ENCODE measurements at regions of chr22 and their contacts with region 1.

Region 1: GRCh38 chr22:29245637-29246385 is 22.0 kb downstream of the RHBDD3 start:
- DNase-seq: peak; percentile 84
- H3K4me3 ChIP-seq: peak overlapping the region in 1 of 2 experiments; percentile 30; a peak in 1 of 4 replicates
- H3K27ac ChIP-seq: no peak overlapping the region
- H3K4me1 ChIP-seq: peaks cover 0 to 4% of the 10 kb centered on the region in 2 experiments; a peak in 1 of 4 replicates
- H3K27me3 ChIP-seq: no peaks in the 10 kb centered on the region
- CTCF ChIP-seq: peak; percentile 93
- EP300 ChIP-seq: no peak
- RAD21 ChIP-seq: peak; percentile 93

Region 2: GRCh38 chr22:28600546-28601143 is 645.2 kb before region 1 on chr22:
- CTCF ChIA-PET with region 1: interaction called, 18 read pairs
- POLR2A ChIA-PET with region 1: no interaction called
- DNase-seq: peak; percentile 25
- H3K4me3 ChIP-seq: no peak overlapping the region; a peak in 1 of 4 replicates
- H3K27ac ChIP-seq: no peak overlapping the region
- H3K4me1 ChIP-seq: peaks cover 0 to 3% of the 10 kb centered on the region in 2 experiments; a peak in 2 of 4 replicates
- H3K27me3 ChIP-seq: no peaks in the 10 kb centered on the region
- CTCF ChIP-seq: peak; percentile 63
- EP300 ChIP-seq: no peak
- RAD21 ChIP-seq: peak; percentile 87

Region 3: DNA sequence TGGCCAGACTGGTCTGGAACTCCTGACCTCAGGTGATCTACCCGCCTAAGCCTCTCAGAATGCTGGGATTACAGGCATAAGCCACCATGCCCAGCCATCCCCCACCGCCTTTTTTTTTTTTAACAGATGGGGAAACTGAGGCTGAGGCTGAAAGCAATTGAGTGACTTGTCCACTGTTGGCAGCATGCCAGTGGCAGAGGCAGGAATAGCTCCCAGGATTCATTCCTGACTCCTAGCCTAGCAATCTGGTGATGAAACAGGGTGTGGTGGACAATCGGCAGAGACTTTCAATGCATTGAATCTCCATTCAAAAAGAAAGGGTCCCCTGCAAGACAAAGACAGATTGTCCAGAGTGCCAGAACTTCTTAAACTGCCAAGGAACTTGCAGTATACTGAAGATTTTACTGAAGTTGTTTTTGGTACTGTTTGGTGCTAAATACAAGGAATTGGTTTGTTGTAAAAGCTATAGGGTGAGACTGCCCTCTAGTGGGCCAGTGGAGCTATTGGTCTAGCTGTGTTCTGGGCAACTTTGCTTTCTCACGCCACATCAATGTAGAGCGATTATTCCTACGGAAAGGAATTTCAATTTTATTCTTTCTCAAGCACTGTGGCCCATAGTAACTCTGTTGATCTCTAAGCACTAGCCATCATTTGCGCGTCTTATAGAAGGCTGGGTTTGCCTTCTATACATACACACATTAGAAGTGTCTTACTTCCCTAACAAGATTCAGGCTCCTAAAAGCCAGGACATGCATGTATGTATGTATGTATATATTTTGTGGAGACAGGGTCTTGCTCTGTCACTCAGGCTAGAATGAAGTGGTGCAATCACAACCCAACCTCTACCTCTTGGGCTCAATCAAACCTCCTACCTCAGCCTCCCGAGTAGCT is 205.2 kb before region 1 on chr22:
- CTCF ChIA-PET with region 1: interaction called, 21 read pairs
- POLR2A ChIA-PET with region 1: no interaction called
- DNase-seq: peak; percentile 73
- H3K4me3 ChIP-seq: no peak overlapping the region; a peak in 1 of 4 replicates
- H3K27ac ChIP-seq: peak overlapping the region in 1 of 2 experiments; percentile 80; a peak in 2 of 4 replicates
- H3K4me1 ChIP-seq: peaks cover 2 to 28% of the 10 kb centered on the region in 2 experiments; a peak in 3 of 4 replicates
- H3K27me3 ChIP-seq: no peaks in the 10 kb centered on the region
- CTCF ChIP-seq: peak; percentile 98
- EP300 ChIP-seq: no peak
- RAD21 ChIP-seq: peak; percentile 97

Region 4: GRCh38 chr22:29195964-29196666 is 49.7 kb before region 1 on chr22:
- CTCF ChIA-PET with region 1: interaction called, 49 read pairs
- POLR2A ChIA-PET with region 1: no interaction called
- DNase-seq: peak; percentile 34
- H3K4me3 ChIP-seq: no peak overlapping the region
- H3K27ac ChIP-seq: no peak overlapping the region
- H3K4me1 ChIP-seq: peaks cover 0 to 9% of the 10 kb centered on the region in 2 experiments; a peak in 1 of 4 replicates
- H3K27me3 ChIP-seq: no peaks in the 10 kb centered on the region
- CTCF ChIP-seq: no peak
- EP300 ChIP-seq: no peak
- RAD21 ChIP-seq: no peak

Region 5: DNA sequence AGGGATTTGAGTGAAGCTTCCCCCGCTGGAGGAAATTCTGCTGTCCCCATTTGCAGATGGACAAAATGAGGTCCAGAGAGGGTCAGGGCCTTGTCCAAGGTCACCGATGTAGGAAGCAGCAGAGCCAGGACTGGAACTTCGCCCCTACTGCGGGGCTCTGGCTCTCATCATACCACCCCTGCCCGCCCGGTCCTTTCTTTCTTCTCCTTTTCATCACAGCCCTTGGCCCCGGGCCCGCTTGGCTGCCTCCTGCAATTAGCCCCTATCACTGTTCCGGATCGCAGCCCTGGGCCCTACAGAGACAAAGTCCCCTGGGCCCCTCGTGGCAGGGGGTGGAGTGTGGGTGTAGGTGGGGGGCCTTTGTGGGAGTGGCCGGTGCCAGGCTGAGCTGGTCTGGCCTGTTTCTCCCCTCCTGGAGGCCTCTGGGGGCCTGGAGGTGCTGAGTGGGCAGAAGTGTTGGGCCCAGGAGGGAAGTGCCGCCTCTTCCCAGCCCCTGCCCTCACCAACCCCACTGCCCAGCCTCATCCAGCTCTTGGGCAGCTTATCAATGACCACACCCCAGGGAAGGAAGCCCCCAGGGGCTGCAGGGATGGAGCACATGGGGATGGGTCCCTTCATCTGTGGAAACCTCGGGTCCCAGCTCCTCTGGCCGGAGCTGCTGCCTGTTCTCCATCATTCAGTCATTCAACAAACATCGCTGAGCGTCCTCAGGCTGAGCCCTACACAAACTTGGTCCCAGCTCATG is 36.8 kb before region 1 on chr22:
- CTCF ChIA-PET with region 1: interaction called, 49 read pairs
- POLR2A ChIA-PET with region 1: no interaction called
- DNase-seq: peak; percentile 66
- H3K4me3 ChIP-seq: no peak overlapping the region
- H3K27ac ChIP-seq: no peak overlapping the region
- H3K4me1 ChIP-seq: peaks cover 0 to 7% of the 10 kb centered on the region in 2 experiments; a peak in 1 of 4 replicates
- H3K27me3 ChIP-seq: no peaks in the 10 kb centered on the region; the same call in 1 of the 2 replicates
- CTCF ChIP-seq: no peak
- EP300 ChIP-seq: no peak
- RAD21 ChIP-seq: no peak

Region 6: DNA sequence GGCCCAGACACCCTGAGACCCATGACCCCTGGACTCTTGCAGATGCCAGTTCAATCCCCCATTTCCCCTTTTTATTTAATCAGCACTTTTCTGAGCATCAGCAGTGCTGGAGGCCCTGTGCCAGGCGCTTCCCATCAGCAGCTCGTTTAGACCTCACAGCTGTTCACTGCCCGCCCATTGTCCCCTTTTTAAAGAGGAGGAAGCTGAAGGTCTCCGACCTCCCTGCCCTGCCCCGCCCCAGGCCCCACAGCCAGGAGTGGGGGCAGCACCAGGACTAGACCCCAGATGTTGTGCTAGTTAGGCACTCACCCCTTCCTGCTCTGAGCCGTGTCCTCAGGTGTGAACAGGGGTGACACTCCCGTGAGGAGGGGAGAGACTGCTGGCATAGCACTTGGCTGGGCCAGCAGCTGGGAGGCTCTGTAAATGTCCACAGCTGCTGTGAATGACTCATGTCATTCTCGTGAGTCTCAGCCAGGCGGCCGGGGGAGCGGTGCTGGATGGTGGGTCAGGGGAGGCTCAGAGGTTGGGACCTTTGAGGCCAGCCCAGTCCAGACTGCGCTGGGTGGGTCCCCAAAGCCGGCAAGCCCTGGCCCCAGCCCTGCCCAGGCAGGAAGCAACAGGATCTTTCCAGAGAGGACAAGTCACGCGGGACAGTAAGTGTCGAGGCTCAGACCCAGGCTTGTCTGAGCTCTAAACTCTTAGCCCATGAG is 20.2 kb before region 1 on chr22:
- CTCF ChIA-PET with region 1: interaction called, 42 read pairs
- POLR2A ChIA-PET with region 1: no interaction called
- DNase-seq: peak; percentile 32
- H3K4me3 ChIP-seq: no peak overlapping the region
- H3K27ac ChIP-seq: no peak overlapping the region
- H3K4me1 ChIP-seq: peaks cover 0 to 10% of the 10 kb centered on the region in 2 experiments; a peak in 1 of 4 replicates
- H3K27me3 ChIP-seq: no peaks in the 10 kb centered on the region
- CTCF ChIP-seq: no peak
- EP300 ChIP-seq: no peak
- RAD21 ChIP-seq: no peak

Region 7: DNA sequence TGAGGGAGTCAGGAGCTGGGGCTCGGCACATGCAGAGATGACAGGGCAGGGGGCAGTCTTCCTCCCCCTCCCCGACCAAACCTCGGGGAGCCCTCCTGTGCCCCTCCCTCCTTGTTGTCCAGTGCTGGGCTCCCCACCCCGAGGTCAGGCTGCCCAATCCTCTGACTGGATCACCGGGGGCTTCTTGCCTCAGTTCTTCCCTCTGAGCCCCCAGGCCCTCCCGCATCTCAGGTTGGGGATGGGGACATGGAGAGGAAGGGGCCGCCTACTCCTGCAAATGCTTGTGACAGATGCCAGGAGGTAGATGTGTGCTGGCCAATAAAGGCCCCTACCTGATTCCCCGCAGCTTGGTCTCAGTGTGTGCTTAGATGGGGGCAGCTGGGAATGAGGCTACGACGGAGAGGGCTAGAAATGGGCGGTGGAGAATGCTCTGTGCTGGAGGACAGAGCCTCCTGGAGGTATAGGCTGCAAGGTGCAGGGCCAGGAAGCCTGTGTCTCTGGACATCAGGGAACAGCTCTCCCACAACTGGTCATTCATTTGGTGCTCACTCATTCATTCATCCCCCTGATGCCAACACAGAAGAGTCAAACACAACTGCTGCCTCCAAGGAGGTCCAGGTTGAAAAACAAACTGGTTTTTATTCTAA is 13.6 kb after region 1 on chr22:
- CTCF ChIA-PET with region 1: interaction called, 57 read pairs
- POLR2A ChIA-PET with region 1: no interaction called
- DNase-seq: peak; percentile 42
- H3K4me3 ChIP-seq: no peak overlapping the region
- H3K27ac ChIP-seq: no peak overlapping the region
- H3K4me1 ChIP-seq: no peaks in the 10 kb centered on the region
- H3K27me3 ChIP-seq: no peaks in the 10 kb centered on the region
- CTCF ChIP-seq: no peak; the same call in 1 of the 2 replicates
- EP300 ChIP-seq: no peak
- RAD21 ChIP-seq: no peak

Region 8: GRCh38 chr22:29369460-29369859 is 123.6 kb after region 1 on chr22:
- CTCF ChIA-PET with region 1: no interaction called
- POLR2A ChIA-PET with region 1: no interaction called
- DNase-seq: no peak
- H3K4me3 ChIP-seq: no peak overlapping the region
- H3K27ac ChIP-seq: no peak overlapping the region
- H3K4me1 ChIP-seq: peaks cover 0 to 8% of the 10 kb centered on the region in 2 experiments; a peak in 1 of 4 replicates
- H3K27me3 ChIP-seq: no peaks in the 10 kb centered on the region
- CTCF ChIP-seq: no peak
- EP300 ChIP-seq: no peak
- RAD21 ChIP-seq: no peak

Measured in SK-N-SH (cell line).